SK-MEL-5 (cell line): ENCODE measurements at regions of chr14 and their contacts with region 1.

Region 1: DNA sequence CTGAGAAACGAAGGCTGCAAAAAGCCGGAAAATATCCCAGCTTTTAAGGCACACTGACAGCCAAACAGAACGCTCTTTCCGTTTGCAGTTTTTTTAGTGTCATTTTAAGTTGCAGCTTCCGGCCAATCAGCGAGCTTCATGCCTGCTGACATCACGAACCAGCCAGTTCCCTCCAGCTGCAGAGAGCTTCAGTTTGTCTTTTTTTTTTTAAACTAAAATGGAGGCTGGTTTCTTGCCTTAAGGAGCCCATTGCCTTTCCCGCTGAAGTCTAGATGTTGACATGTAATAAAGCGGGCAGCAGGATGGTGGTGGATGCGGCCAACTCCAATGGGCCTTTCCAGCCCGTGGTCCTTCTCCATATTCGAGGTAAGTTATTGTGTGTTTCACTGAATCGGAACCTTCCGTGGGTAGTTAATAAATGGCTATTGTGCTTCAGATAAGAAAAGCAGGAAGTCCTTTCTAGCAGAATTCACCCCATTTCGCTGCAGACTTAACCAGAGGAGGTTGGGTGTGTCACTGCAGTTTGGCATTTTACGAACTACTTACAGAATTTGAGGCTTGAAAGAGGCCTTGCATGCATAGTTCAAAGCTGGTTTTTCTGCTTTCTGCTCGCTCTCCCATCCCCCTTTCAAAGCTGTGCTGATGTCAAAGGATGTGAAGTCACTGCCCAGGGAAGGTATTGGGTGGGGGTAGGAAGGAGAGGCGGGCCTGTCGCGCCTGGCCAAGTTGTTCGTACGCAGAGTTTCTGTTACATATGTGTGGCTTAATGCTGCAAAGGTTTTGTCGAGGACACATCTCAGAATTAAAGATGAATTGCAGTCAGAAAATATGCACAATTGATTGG is 48.4 kb downstream of the PPP2R5C start:
- DNase-seq: peak; percentile 96

Region 2: DNA sequence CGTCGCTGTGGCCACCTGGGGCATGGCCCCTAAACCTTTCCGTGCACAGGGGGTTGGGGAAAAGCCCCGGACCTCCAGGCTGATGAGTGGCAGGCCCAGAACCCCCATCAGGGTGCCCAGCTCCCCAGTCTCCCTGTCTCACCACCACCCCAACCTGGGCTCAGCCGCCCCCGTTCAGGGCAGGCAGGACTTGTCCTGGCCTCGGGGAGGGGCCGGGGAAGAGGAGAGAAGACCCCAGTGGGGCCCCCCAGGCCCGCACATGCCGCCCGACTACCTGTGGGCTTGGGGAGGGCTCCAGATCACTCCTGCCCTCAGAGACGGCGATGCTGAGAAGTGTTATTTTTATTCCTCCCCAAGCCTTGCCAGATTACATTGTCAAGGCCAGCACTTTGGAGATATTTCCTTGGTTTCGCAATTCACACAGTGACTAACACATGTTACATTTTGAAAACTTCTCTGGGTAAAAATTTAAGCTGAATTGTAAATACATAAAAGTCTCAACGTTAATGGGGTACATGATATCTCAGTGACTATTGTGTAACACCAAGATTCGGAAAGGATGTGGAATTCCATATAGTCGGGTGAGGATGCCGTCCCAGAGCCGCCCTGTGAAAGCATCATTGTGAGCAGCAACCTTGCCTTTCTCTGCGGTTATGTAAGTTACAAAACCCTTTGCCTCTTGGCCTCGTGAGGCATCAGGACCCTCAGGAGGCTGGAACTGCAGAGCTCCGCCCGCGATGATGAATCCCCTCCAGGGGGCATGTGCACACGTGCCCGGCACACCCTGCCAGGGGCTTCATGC is 334.2 kb before region 1 on chr14:
- in situ Hi-C with region 1: no loop called
- DNase-seq: no peak

Region 3: DNA sequence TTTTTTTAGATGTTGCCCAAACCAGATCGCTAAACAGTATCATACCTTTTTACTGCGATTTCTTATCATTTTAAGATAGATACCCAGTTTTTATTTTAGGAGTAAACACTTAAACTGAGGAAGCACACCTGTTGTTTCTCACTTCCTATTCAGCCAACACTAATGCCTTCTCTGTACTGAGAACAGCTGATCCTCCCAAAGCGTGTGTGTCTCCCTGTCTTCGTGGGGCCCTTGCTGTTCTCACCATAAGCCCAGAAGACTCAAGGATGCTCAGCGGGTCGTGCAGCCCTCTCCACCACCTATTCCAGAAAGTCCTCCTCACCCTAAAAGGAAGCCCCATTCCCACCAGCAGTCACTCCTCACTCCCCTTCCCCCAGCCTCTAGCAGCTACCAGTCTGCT is 33.5 kb before region 1 on chr14:
- in situ Hi-C with region 1: loop called (anchors 5 kb)
- DNase-seq: no peak

Region 4: DNA sequence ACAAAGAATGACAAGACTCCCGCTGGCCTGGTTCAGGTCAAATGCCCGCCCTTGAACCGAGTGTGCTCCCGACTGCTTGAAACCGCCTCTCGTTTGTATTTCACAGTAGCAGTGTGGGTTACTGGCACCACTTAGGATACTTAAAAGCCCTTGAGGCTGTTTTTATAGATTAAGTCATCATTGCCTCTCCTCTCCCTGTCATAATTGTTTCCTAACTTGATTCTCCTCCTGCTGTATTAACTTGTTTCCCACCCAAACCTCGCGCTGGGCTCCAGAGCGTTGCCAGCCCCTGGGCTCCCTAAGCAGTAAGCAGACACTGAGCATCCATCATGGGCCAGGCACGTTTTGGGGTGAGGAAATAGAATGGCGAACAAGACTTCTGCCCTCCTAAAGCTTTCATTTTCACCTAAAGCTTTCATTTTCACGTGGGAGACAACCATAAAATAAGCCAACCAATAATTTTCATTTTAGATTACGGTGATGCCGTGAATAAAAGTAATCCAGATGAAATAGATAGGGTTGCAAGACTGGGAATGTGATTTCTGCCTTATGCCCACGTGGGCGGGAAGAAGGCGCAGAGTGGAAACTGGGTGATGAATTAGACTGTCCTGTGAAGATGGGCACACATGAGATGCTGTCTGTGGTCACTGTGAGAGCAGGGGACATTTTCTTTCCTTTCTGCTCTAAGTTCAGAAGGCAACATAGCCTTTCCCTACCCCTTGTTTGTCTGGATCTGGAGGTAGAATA is 49.1 kb after region 1 on chr14:
- in situ Hi-C with region 1: loop called (anchors 5 kb)
- DNase-seq: no peak

Region 5: GRCh38 chr14:101927859-101928258 is 118.0 kb after region 1 on chr14:
- in situ Hi-C with region 1: no loop called
- DNase-seq: peak; percentile 49